ENCODE measurements at regions of chr1 and their contacts with region 1.

Region 1: GRCh38 chr1:223845810-223846682 is at the start of gene TP53BP2:
- DNase-seq: peak; percentile 96
- H3K4me3 Mint-ChIP-seq: peak within 1 kb of the TSS; percentile 94
- H3K27ac Mint-ChIP-seq: peak within 1 kb of the TSS; percentile 93
- H3K4me1 Mint-ChIP-seq: peaks cover 24% of the 10 kb centered on the region
- H3K27me3 Mint-ChIP-seq: no peaks in the 10 kb centered on the region
- CTCF ChIP-seq: peak; percentile 86
- total RNA-seq, gene TP53BP2: 59.5 and 66.4 TPM in 2 replicates

Region 2: GRCh38 chr1:223716302-223716862 is 129.7 kb before region 1 on chr1:
- CTCF ChIA-PET with region 1: no interaction called
- intact Hi-C with region 1: no loop called
- DNase-seq: no peak
- H3K4me3 Mint-ChIP-seq: peak overlapping the region; percentile 20
- H3K27ac Mint-ChIP-seq: peak overlapping the region; percentile 45
- H3K4me1 Mint-ChIP-seq: peaks cover 76% of the 10 kb centered on the region
- H3K27me3 Mint-ChIP-seq: no peaks in the 10 kb centered on the region
- CTCF ChIP-seq: no peak

Region 3: GRCh38 chr1:223828162-223828848 is 17.7 kb before region 1 on chr1:
- CTCF ChIA-PET with region 1: no interaction called
- intact Hi-C with region 1: loop called (anchors 2 kb)
- DNase-seq: no peak
- H3K4me3 Mint-ChIP-seq: no peak overlapping the region
- H3K27ac Mint-ChIP-seq: no peak overlapping the region
- H3K4me1 Mint-ChIP-seq: peaks cover 43% of the 10 kb centered on the region
- H3K27me3 Mint-ChIP-seq: no peaks in the 10 kb centered on the region
- CTCF ChIP-seq: no peak

Region 4: DNA sequence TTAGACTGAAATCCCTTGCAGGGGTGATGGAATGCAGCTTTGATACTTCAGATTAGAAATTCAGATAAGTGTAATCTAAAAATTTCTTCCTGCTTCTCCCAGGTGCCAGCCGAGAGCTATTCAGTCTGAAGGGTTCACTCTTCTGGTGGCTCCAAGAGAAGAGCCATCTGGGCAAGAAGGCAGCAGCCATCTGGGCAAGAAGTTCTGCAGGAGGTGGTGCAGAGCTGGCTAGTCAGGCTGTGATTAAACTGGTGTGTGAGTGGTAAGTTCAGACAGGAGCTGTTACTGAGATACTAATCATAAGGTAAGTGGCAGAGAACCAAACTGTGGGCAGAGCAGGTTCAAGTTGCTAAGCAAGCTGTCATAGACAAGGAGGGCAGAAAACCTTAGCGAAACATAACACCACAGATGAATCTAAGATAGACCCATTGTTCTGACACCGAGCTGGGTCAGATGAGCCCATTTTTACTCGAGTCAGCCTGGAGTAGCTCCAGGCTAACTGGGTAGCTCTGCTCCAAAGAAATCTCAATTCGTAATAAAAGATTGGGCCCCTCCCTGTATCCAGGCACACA is 14.1 kb after region 1 on chr1:
- CTCF ChIA-PET with region 1: no interaction called
- intact Hi-C with region 1: no loop called
- DNase-seq: no peak
- H3K4me3 Mint-ChIP-seq: no peak overlapping the region
- H3K27ac Mint-ChIP-seq: no peak overlapping the region
- H3K4me1 Mint-ChIP-seq: peaks cover 18% of the 10 kb centered on the region
- H3K27me3 Mint-ChIP-seq: no peaks in the 10 kb centered on the region
- CTCF ChIP-seq: no peak